Endothelial cell of umbilical vein (primary cell): ENCODE measurements at regions of chr6 and their contacts with region 1.

Region 1: GRCh38 chr6:22448291-22448711 is 121.1 kb upstream of the HDGFL1 start:
- DNase-seq: peak; percentile 98
- H3K4me3 ChIP-seq: no peak overlapping the region
- H3K27ac ChIP-seq: peak overlapping the region; percentile 85
- H3K4me1 ChIP-seq: peaks cover 49% of the 10 kb centered on the region
- H3K27me3 ChIP-seq: no peaks in the 10 kb centered on the region
- CTCF ChIP-seq: no peak
- POLR2A ChIP-seq: no peak

Region 2: GRCh38 chr6:21987501-21987957 is 460.8 kb before region 1 on chr6:
- CTCF ChIA-PET with region 1: no interaction called
- POLR2A ChIA-PET with region 1: no interaction called
- dilution Hi-C with region 1: no loop called
- intact Hi-C with region 1: loop called (anchors 10 kb)
- DNase-seq: peak; percentile 96
- H3K4me3 ChIP-seq: peak overlapping the region in 1 of 3 experiments; percentile 26
- H3K27ac ChIP-seq: peak overlapping the region; percentile 88
- H3K4me1 ChIP-seq: peaks cover 33% of the 10 kb centered on the region
- H3K27me3 ChIP-seq: no peaks in the 10 kb centered on the region
- CTCF ChIP-seq: no peak
- POLR2A ChIP-seq: peak; percentile 21

Region 3: GRCh38 chr6:22025468-22026160 is 422.7 kb before region 1 on chr6:
- CTCF ChIA-PET with region 1: no interaction called
- POLR2A ChIA-PET with region 1: no interaction called
- dilution Hi-C with region 1: no loop called
- intact Hi-C with region 1: loop called (anchors 5 kb)
- DNase-seq: peak; percentile 95
- H3K4me3 ChIP-seq: no peak overlapping the region
- H3K27ac ChIP-seq: peak overlapping the region; percentile 86
- H3K4me1 ChIP-seq: peaks cover 16% of the 10 kb centered on the region
- H3K27me3 ChIP-seq: no peaks in the 10 kb centered on the region
- CTCF ChIP-seq: no peak
- POLR2A ChIP-seq: no peak

Region 4: GRCh38 chr6:22221630-22222029 is 226.7 kb before region 1 on chr6:
- CTCF ChIA-PET with region 1: no interaction called
- POLR2A ChIA-PET with region 1: no interaction called
- dilution Hi-C with region 1: no loop called
- intact Hi-C with region 1: loop called (anchors 10 kb)
- DNase-seq: no peak
- H3K4me3 ChIP-seq: no peak overlapping the region
- H3K27ac ChIP-seq: no peak overlapping the region
- H3K4me1 ChIP-seq: no peaks in the 10 kb centered on the region
- H3K27me3 ChIP-seq: no peaks in the 10 kb centered on the region
- CTCF ChIP-seq: no peak
- POLR2A ChIP-seq: no peak

Region 5: DNA sequence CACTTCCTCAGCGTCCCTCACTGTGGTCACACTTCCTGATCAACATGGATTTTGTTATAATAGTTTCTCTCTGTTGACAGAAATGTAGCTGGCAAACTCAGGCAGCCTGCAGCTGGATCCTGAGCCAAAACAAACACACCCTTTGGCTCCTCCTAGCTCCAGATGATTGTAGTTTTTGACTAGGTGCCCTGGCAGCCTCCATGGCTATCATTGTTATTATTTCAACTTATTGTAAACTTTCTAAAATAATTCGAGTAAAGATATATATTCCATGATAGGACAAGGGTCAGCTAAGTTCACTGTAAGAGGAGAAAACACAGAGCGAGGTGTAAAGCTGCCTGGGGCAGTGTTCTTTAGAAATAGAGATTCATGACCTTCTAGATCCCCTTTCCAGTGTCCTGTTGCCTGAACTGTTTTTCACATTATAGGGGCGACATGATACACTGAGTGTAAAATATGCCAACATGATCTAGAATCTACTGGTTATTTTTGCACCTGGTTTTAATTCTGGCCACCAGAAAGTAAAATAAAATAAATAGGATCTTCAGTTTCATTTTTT is 22.9 kb after region 1 on chr6:
- CTCF ChIA-PET with region 1: no interaction called
- POLR2A ChIA-PET with region 1: no interaction called
- dilution Hi-C with region 1: no loop called
- intact Hi-C with region 1: loop called (anchors 1 kb)
- DNase-seq: peak; percentile 98
- H3K4me3 ChIP-seq: no peak overlapping the region
- H3K27ac ChIP-seq: peak overlapping the region; percentile 56
- H3K4me1 ChIP-seq: peaks cover 27% of the 10 kb centered on the region
- H3K27me3 ChIP-seq: no peaks in the 10 kb centered on the region
- CTCF ChIP-seq: no peak
- POLR2A ChIP-seq: no peak

Region 6: DNA sequence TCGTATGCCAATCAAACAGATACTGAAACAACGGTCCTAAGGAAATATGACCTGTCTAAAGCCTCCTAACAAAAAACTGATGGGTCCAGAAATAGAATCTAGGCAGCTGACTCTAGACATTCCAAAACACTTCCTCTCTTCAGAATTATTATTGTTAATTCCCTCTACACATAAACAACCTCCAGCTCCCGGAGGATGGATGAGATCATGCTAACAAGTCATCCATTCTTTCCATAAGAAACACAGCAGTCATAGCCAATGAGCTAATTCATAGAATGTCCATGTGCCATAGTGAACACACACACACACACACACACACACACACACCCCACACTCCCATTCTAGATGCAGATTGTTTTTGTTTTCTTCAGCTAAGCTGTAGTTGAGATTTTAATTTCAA is 165.4 kb after region 1 on chr6:
- CTCF ChIA-PET with region 1: no interaction called
- POLR2A ChIA-PET with region 1: no interaction called
- dilution Hi-C with region 1: no loop called
- intact Hi-C with region 1: loop called (anchors 10 kb)
- DNase-seq: peak; percentile 96
- H3K4me3 ChIP-seq: no peak overlapping the region
- H3K27ac ChIP-seq: peak overlapping the region; percentile 53
- H3K4me1 ChIP-seq: peaks cover 12% of the 10 kb centered on the region
- H3K27me3 ChIP-seq: no peaks in the 10 kb centered on the region
- CTCF ChIP-seq: no peak
- POLR2A ChIP-seq: no peak

Region 7: DNA sequence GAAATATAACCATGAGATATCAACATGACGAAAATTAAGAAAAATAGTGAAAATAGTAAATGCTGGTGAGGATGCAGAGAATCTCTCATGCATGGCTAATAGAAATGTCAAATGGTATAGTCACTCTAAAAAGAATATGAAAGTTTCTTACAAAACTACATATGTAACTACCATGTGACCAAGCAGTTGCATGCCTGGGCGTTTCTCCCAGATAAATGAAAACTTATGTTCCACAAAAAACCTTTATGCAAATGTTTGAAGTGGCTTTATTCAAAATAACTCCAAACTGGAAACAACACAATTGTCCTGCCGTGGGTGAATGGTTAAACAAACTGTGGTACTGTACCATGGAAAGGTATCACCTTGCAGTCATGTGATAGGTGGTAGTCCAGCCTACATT is 233.5 kb after region 1 on chr6:
- CTCF ChIA-PET with region 1: no interaction called
- POLR2A ChIA-PET with region 1: no interaction called
- dilution Hi-C with region 1: no loop called
- intact Hi-C with region 1: no loop called
- DNase-seq: no peak
- H3K4me3 ChIP-seq: no peak overlapping the region
- H3K27ac ChIP-seq: no peak overlapping the region
- H3K4me1 ChIP-seq: no peaks in the 10 kb centered on the region
- H3K27me3 ChIP-seq: no peaks in the 10 kb centered on the region
- CTCF ChIP-seq: no peak
- POLR2A ChIP-seq: no peak

Region 8: DNA sequence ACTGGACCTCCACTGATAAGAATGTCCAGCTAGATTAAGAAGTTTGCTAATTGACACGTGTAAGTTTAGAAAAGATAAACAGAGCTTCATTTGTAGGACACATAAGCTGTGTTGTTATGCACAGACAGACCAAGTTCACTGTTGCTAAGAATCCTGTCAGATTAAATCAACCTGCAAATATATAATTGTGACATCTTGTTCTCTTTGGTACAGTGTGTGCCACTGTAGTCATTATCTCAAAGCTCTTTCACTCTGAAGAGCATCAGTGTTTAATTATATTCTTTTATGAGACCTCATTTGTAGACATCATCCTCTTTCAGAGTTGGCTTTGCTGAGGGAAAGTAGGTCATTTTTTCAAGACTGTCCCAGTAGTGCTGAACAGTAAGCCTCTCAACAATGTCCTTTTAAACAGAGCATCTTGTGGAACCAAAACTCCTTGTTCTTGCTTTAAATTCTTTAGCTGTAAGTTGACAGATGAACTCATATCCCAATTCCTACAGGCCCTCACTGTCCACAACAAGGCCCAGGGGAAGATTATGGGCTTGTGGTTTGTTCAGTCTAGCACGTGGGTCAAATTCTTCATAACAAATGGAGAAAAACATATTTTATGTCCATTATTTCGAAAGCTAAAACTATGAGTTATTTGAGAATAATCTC is 373.5 kb after region 1 on chr6:
- CTCF ChIA-PET with region 1: no interaction called
- POLR2A ChIA-PET with region 1: no interaction called
- dilution Hi-C with region 1: no loop called
- intact Hi-C with region 1: no loop called
- DNase-seq: no peak
- H3K4me3 ChIP-seq: no peak overlapping the region
- H3K27ac ChIP-seq: no peak overlapping the region
- H3K4me1 ChIP-seq: peaks cover 5% of the 10 kb centered on the region
- H3K27me3 ChIP-seq: no peaks in the 10 kb centered on the region
- CTCF ChIP-seq: no peak
- POLR2A ChIP-seq: no peak